ENCODE measurements at regions of chr17 and their contacts with region 1.

Region 1: GRCh38 chr17:11421864-11422263 is 176.4 kb upstream of the DNAH9 start:
- DNase-seq: no peak
- H3K4me3 ChIP-seq: no peak overlapping the region
- H3K27ac ChIP-seq: no peak overlapping the region
- H3K4me1 ChIP-seq: no peaks in the 10 kb centered on the region
- H3K27me3 ChIP-seq: no peaks in the 10 kb centered on the region
- CTCF ChIP-seq: no peak
- POLR2A ChIP-seq: no peak

Region 2: GRCh38 chr17:12164085-12164484 is 742.2 kb after region 1 on chr17:
- intact Hi-C with region 1: loop called (anchors 10 kb)
- DNase-seq: no peak
- H3K4me3 ChIP-seq: no peak overlapping the region
- H3K27ac ChIP-seq: no peak overlapping the region
- H3K4me1 ChIP-seq: no peaks in the 10 kb centered on the region
- H3K27me3 ChIP-seq: no peaks in the 10 kb centered on the region
- CTCF ChIP-seq: no peak
- POLR2A ChIP-seq: no peak

Measured in breast epithelium (tissue), 4 donors.